Naive thymus-derived CD4-positive, alpha-beta T cell (primary cell): ENCODE measurements at regions of chr14 and their contacts with region 1.

Region 1: GRCh38 chr14:102774391-102775153 is 2.7 kb upstream of the TRAF3 start:
- DNase-seq: peak; percentile 39 to 85 (median 76)
- ATAC-seq: peak; percentile 52
- H3K4me3 ChIP-seq: no peak overlapping the region
- H3K4me3 Mint-ChIP-seq: peak overlapping the region; percentile 48 to 79 (median 63)
- H3K27ac ChIP-seq: peak overlapping the region; percentile 79
- H3K27ac Mint-ChIP-seq: peak overlapping the region; percentile 83 to 97 (median 92)
- H3K4me1 ChIP-seq: peaks cover 13 to 30% of the 10 kb centered on the region in 2 donors
- H3K4me1 Mint-ChIP-seq: peaks cover 14 to 44% (median 35%) of the 10 kb centered on the region in 7 donors
- H3K27me3 ChIP-seq: no peaks in the 10 kb centered on the region
- H3K27me3 Mint-ChIP-seq: no peaks in the 10 kb centered on the region

Region 2: DNA sequence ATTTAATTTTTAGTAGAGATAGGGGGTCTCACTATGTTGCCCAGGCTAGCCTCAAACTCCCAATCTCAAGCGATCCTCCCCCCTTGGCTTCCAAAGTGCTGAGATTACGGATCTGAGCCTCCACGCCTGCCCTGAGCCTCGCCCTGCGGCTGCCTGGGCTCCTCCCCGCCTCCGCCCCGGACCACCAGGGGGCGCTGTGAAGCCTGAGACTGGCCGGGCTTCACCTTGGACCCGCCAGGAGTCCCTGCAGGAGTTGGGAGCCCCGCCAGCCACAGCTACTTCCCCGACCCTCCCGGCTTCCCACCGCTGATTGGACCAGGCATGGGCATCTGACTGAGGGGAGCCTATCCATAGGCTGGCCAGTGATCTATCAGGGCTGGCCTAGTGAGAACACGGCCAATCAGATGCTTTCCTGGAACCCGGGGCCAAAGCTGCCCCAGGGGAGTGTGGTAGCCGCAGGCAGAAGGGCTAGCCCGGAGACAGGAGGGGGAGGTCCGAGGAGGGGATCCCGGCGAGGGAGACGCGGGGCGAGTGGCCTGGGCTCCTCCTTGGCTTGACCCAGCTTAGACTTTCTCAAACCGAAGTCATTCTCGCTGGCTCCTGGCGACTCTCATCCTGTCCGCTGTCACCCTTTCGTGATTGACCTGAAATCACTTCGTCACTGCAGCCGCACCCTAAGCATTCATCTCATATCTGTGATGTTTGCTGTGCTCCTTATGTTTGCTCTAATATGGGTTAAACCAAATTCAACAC is 249.9 kb before region 1 on chr14:
- CTCF ChIA-PET with region 1: no interaction called
- POLR2A ChIA-PET with region 1: no interaction called
- intact Hi-C with region 1: loop called in 1 of 2 experiments (anchors 5 kb)
- DNase-seq: peak; percentile 75 to 99 (median 86)
- ATAC-seq: peak; percentile 92
- H3K4me3 ChIP-seq: peak overlapping the region; percentile 69
- H3K4me3 Mint-ChIP-seq: peak overlapping the region; percentile 73 to 90 (median 85)
- H3K27ac ChIP-seq: peak overlapping the region; percentile 60
- H3K27ac Mint-ChIP-seq: peak overlapping the region; percentile 21 to 94 (median 78)
- H3K4me1 ChIP-seq: peaks cover 16 to 18% of the 10 kb centered on the region in 2 donors
- H3K4me1 Mint-ChIP-seq: peaks cover 20 to 32% (median 29%) of the 10 kb centered on the region in 7 donors
- H3K27me3 ChIP-seq: no peaks in the 10 kb centered on the region
- H3K27me3 Mint-ChIP-seq: no peaks in the 10 kb centered on the region

Region 3: GRCh38 chr14:102805371-102806246 is 31.0 kb after region 1 on chr14:
- CTCF ChIA-PET with region 1: no interaction called
- POLR2A ChIA-PET with region 1: no interaction called
- intact Hi-C with region 1: loop called (anchors 1 kb)
- DNase-seq: peak in 5 of 9 donors; percentile 4 to 56 (median 10)
- ATAC-seq: peak; percentile 60
- H3K4me3 ChIP-seq: no peak overlapping the region
- H3K4me3 Mint-ChIP-seq: peak overlapping the region; percentile 27 to 84 (median 61)
- H3K27ac ChIP-seq: no peak overlapping the region
- H3K27ac Mint-ChIP-seq: peak overlapping the region; percentile 44 to 94 (median 78)
- H3K4me1 ChIP-seq: peaks cover 30 to 36% of the 10 kb centered on the region in 2 donors
- H3K4me1 Mint-ChIP-seq: peaks cover 45 to 72% (median 64%) of the 10 kb centered on the region in 7 donors
- H3K27me3 ChIP-seq: no peaks in the 10 kb centered on the region
- H3K27me3 Mint-ChIP-seq: no peaks in the 10 kb centered on the region

Region 4: DNA sequence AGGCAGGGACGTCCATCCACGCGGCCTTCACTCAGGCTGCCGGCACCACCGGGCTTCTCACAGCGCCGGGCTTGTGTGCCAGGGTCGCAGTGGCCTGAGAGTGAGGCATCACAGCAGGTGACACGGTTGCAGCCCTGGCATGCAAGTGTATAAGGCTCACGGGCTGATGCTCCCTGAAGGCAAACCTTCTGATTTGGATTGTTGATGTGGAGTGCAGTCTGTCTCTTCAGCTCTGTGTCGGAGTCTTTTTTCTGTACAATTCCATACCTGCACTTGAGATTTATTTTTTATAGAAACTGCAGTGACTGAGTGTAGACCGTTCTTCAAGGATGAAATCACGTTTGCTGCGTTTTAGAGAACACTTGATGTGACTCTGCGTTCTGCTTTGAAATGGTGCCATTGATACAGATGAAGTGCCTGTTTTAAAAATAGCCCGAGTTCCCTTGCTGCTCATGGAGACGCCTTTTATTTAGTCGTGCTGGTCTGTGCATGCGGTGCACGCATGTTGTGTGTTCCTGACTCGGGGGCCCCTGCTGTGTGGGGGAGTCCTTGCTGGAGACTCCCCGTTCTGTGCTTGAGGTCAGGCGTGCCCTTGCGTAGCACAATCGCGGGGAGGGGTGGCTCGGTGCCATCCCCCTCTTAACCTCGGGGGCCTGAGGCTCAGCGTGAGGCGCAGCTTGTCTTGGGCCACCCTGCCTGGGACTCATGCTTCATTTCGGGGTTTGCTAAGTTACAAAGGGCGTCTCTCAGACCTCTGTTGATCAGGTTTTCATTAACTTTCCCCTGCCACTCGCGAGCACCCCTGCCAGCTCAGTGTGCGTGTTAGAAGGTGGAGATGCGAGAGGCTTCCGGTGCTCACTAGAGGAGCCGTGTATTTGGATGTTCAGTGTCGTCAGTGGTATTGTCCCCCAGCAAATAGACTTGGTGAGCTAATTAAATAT is 126.3 kb after region 1 on chr14:
- CTCF ChIA-PET with region 1: no interaction called
- POLR2A ChIA-PET with region 1: interaction called, 3 read pairs
- intact Hi-C with region 1: loop called in 1 of 2 experiments (anchors 1 kb)
- DNase-seq: peak in 7 of 9 donors; percentile 49 to 70 (median 60)
- ATAC-seq: peak; percentile 83
- H3K4me3 ChIP-seq: peak overlapping the region; percentile 26
- H3K4me3 Mint-ChIP-seq: peak overlapping the region; percentile 6 to 77 (median 64)
- H3K27ac ChIP-seq: peak overlapping the region; percentile 59
- H3K27ac Mint-ChIP-seq: peak overlapping the region; percentile 75 to 96 (median 91)
- H3K4me1 ChIP-seq: peaks cover 5 to 15% of the 10 kb centered on the region in 2 donors
- H3K4me1 Mint-ChIP-seq: peaks cover 0 to 29% (median 19%) of the 10 kb centered on the region in 7 donors
- H3K27me3 ChIP-seq: no peaks in the 10 kb centered on the region
- H3K27me3 Mint-ChIP-seq: no peaks in the 10 kb centered on the region

Region 5: GRCh38 chr14:103385152-103385993 is 610.8 kb after region 1 on chr14 and contains the start of gene MARK3:
- CTCF ChIA-PET with region 1: no interaction called
- POLR2A ChIA-PET with region 1: no interaction called
- intact Hi-C with region 1: loop called in 1 of 2 experiments (anchors 5 kb)
- DNase-seq: peak; percentile 92 to 96 (median 95)
- ATAC-seq: peak; percentile 93
- H3K4me3 ChIP-seq: peak within 1 kb of the TSS; percentile 98
- H3K4me3 Mint-ChIP-seq: peak within 1 kb of the TSS; percentile 94 to 99 (median 96)
- H3K27ac ChIP-seq: peak within 1 kb of the TSS; percentile 90
- H3K27ac Mint-ChIP-seq: peak within 1 kb of the TSS; percentile 91 to 98 (median 95)
- H3K4me1 ChIP-seq: peaks cover 26 to 32% of the 10 kb centered on the region in 2 donors
- H3K4me1 Mint-ChIP-seq: peaks cover 12 to 51% (median 37%) of the 10 kb centered on the region in 7 donors
- H3K27me3 ChIP-seq: no peaks in the 10 kb centered on the region
- H3K27me3 Mint-ChIP-seq: peaks cover 0 to 13% (median 9%) of the 10 kb centered on the region in 5 donors
- total RNA-seq, gene MARK3: 86.9 to 133 (median 116) TPM